HepG2 (cell line): ENCODE measurements at regions of chr5 and their contacts with region 1.

Region 1: GRCh38 chr5:77806213-77806843 is 30.2 kb upstream of the TBCA start:
- DNase-seq: no peak
- ATAC-seq: no peak
- H3K4me3 ChIP-seq: no peak overlapping the region
- H3K27ac ChIP-seq: no peak overlapping the region
- H3K4me1 ChIP-seq: peaks cover 10% of the 10 kb centered on the region; the same call in 1 of the 2 replicates
- H3K27me3 ChIP-seq: no peaks in the 10 kb centered on the region; a peak in 1 of 5 replicates
- CTCF ChIP-seq: no peak
- EP300 ChIP-seq: no peak
- POLR2A ChIP-seq: no peak
- RAD21 ChIP-seq: no peak

Region 2: DNA sequence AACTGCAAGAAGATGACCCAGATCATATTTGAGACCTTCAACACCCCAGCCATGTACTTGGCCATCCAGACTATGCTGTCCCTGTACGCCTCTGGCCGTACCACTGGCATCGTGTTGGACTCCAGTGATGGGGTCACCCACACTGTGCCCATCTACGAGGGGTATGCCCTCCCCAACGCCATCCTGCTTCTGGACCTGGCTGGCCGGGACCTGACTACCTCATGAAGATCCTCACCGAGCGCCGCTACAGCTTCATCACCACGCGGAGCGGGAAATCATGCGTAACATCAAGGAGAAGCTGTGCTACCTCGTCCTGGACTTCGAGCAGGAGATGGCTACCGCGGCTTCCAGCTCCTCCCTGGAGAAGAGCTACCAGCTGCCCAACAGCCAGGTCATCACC is 21.1 kb before region 1 on chr5:
- CTCF ChIA-PET with region 1: no interaction called
- POLR2A ChIA-PET with region 1: no interaction called
- in situ Hi-C with region 1: no loop called
- intact Hi-C with region 1: loop called (anchors 2 kb)
- DNase-seq: no peak
- ATAC-seq: no peak
- H3K4me3 ChIP-seq: no peak overlapping the region
- H3K27ac ChIP-seq: no peak overlapping the region
- H3K4me1 ChIP-seq: no peaks in the 10 kb centered on the region
- H3K27me3 ChIP-seq: no peaks in the 10 kb centered on the region; a peak in 1 of 5 replicates
- CTCF ChIP-seq: no peak
- EP300 ChIP-seq: no peak
- POLR2A ChIP-seq: no peak
- RAD21 ChIP-seq: no peak